Endothelial cell of umbilical vein (primary cell): ENCODE measurements at regions of chr1 and their contacts with region 1.

Region 1: DNA sequence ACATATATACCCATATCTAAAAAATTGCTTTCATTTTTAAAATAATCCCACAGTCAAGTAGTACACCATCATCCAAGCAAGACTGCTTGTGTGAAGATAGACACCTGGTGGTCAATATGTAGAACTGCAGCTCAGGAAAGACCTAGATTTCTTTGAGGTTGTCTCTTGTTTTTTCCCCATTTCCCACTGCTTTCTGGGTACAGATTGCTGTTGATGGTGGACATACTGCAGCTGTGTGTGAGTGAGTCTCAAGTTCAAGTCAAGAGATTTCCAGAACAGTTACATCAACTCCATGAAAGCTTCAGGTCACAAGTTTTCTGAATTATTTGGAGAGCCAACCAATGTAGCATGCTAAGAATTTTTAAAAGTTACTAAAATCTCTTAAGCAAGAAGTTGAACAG is 306.4 kb downstream of the DUSP10 start:
- DNase-seq: peak; percentile 75
- H3K4me3 ChIP-seq: no peak overlapping the region
- H3K27ac ChIP-seq: peak overlapping the region; percentile 16
- H3K4me1 ChIP-seq: peaks cover 26% of the 10 kb centered on the region
- H3K27me3 ChIP-seq: no peaks in the 10 kb centered on the region
- CTCF ChIP-seq: peak; percentile 73 to 81
- POLR2A ChIP-seq: no peak

Region 2: DNA sequence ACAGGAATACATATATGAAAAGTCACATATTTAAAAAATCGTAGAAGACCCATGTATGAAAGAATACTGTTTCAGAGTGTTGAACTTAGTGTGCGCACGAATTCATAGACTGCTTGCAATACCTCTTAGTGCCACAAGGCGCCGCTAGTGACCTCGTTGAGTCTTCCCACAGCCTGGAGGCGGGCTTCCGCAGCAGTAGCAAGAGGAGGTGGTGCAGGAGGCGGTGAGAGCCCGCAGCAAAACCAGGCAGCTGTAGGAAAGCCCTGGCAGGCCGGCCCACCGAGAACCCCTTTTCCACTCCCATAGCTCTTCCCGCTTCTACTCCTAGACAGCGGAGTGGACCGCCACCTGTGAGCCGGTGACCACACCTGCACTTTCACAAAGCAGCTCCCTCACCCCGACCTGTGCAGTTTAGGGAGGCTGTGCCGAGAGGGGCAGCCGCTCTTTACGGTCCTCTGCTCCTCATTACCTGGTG is 625.3 kb before region 1 on chr1:
- CTCF ChIA-PET with region 1: interaction called, 43 read pairs
- POLR2A ChIA-PET with region 1: no interaction called
- dilution Hi-C with region 1: no loop called
- intact Hi-C with region 1: loop called (anchors 1 kb)
- DNase-seq: peak; percentile 82
- H3K4me3 ChIP-seq: no peak overlapping the region
- H3K27ac ChIP-seq: no peak overlapping the region
- H3K4me1 ChIP-seq: peaks cover 8% of the 10 kb centered on the region
- H3K27me3 ChIP-seq: peaks cover 6 to 11% of the 10 kb centered on the region in 2 experiments
- CTCF ChIP-seq: peak; percentile 89 to 95
- POLR2A ChIP-seq: no peak

Region 3: GRCh38 chr1:220908757-220909156 is 526.7 kb before region 1 on chr1:
- CTCF ChIA-PET with region 1: interaction called, 17 read pairs
- POLR2A ChIA-PET with region 1: no interaction called
- dilution Hi-C with region 1: no loop called
- intact Hi-C with region 1: loop called (anchors 1 kb)
- DNase-seq: peak; percentile 38
- H3K4me3 ChIP-seq: no peak overlapping the region
- H3K27ac ChIP-seq: no peak overlapping the region
- H3K4me1 ChIP-seq: no peaks in the 10 kb centered on the region
- H3K27me3 ChIP-seq: peaks cover 9 to 11% of the 10 kb centered on the region in 2 experiments
- CTCF ChIP-seq: peak; percentile 9 to 44
- POLR2A ChIP-seq: no peak

Region 4: DNA sequence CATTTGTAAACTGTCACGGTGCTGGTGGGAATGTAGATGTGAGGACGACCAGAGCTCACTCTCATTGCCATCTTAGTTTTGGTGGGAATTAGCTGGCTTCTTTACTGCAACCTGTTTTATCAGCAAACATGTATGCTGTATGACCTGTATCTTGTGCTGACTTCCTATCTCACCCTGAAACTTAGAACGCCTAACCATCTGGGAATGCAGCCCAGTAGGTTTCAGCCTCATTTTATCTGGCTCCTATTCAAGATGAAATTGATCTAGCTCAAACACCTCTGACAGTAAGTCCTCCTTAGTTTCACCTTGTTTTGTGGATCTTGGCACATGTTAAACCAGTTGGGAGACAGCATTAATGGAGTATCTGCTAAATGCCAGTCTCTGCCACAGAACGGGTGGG is 381.6 kb before region 1 on chr1:
- CTCF ChIA-PET with region 1: no interaction called
- POLR2A ChIA-PET with region 1: no interaction called
- dilution Hi-C with region 1: no loop called
- intact Hi-C with region 1: no loop called
- DNase-seq: no peak
- H3K4me3 ChIP-seq: no peak overlapping the region
- H3K27ac ChIP-seq: no peak overlapping the region
- H3K4me1 ChIP-seq: no peaks in the 10 kb centered on the region
- H3K27me3 ChIP-seq: no peaks in the 10 kb centered on the region
- CTCF ChIP-seq: no peak
- POLR2A ChIP-seq: no peak

Region 5: GRCh38 chr1:221217029-221217428 is 218.5 kb before region 1 on chr1:
- CTCF ChIA-PET with region 1: no interaction called
- POLR2A ChIA-PET with region 1: no interaction called
- dilution Hi-C with region 1: no loop called
- intact Hi-C with region 1: loop called (anchors 2 kb)
- DNase-seq: peak; percentile 92
- H3K4me3 ChIP-seq: no peak overlapping the region
- H3K27ac ChIP-seq: peak overlapping the region; percentile 6
- H3K4me1 ChIP-seq: peaks cover 14% of the 10 kb centered on the region
- H3K27me3 ChIP-seq: peaks cover 0 to 3% of the 10 kb centered on the region in 2 experiments
- CTCF ChIP-seq: no peak
- POLR2A ChIP-seq: no peak

Region 6: GRCh38 chr1:221394011-221394544 is 41.4 kb before region 1 on chr1:
- CTCF ChIA-PET with region 1: interaction called, 14 read pairs
- POLR2A ChIA-PET with region 1: no interaction called
- dilution Hi-C with region 1: no loop called
- intact Hi-C with region 1: loop called (anchors 1 kb)
- DNase-seq: peak; percentile 99
- H3K4me3 ChIP-seq: no peak overlapping the region
- H3K27ac ChIP-seq: peak overlapping the region; percentile 77
- H3K4me1 ChIP-seq: peaks cover 28% of the 10 kb centered on the region
- H3K27me3 ChIP-seq: peaks cover 2 to 3% of the 10 kb centered on the region in 2 experiments
- CTCF ChIP-seq: no peak
- POLR2A ChIP-seq: no peak

Region 7: DNA sequence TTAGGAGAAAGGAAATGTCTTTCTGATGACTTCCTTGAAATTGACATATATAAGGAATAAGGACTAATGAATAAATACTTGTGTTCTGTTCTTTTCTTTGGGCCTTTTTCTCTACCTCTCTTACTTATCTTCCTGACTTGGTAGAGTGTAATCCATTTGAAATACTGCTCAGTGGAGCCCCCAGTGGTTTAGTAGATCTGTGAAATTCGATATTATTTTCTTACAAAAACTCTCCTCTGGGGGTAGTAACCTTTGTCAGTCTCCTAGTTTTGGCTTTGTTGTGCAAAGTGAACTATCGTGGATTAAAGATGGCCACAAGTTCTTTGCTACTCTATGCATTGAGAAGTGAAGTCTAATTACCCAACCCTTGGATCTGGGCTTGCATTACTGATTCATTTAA is 257.6 kb after region 1 on chr1:
- CTCF ChIA-PET with region 1: no interaction called
- POLR2A ChIA-PET with region 1: no interaction called
- dilution Hi-C with region 1: no loop called
- intact Hi-C with region 1: no loop called
- DNase-seq: no peak
- H3K4me3 ChIP-seq: no peak overlapping the region
- H3K27ac ChIP-seq: no peak overlapping the region
- H3K4me1 ChIP-seq: no peaks in the 10 kb centered on the region
- H3K27me3 ChIP-seq: peaks cover 0 to 3% of the 10 kb centered on the region in 2 experiments
- CTCF ChIP-seq: no peak
- POLR2A ChIP-seq: no peak

Region 8: DNA sequence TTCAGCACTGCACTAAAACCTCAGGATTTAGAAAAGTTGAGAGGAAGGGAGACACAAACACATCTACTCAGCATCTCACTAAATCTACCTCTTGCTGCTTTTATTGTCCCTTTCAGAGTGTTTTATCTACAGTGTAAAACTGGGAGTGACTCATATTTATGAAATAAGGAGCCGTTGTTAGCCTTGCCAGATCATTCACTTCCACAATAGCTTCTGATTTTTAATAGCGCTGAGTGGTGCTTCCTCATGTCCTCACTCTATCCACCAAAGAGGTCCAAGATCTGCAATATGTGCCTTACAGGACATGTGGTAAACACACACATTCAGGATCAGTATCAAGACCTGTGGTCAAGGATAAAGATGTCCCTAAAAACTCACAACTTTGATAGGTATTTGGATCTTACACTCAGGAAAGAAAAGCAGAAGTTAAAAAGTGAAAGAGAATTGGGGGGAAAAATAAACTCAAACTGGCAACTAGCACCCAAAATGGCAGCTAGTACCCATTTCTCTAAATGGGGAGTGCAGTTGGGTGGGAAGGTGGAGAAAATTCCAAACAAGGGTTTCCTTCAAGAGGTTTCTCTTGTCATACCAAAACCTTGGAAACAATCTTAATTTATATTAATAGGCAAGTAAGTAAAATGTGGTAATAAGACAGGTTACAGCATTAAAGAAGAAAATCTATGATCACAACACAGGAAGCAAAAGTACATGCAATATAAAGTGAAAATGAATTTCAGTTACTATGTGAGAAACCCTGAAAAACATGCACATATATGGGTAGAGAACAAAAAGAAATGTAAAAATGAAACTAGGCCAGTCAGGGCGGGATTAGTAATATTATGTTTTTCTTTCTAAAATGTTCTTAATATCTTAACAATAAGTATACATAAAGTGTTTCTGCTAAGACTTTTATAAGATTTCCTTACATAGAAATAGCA is 290.5 kb after region 1 on chr1:
- CTCF ChIA-PET with region 1: no interaction called
- POLR2A ChIA-PET with region 1: no interaction called
- dilution Hi-C with region 1: no loop called
- intact Hi-C with region 1: no loop called
- DNase-seq: no peak
- H3K4me3 ChIP-seq: no peak overlapping the region
- H3K27ac ChIP-seq: no peak overlapping the region
- H3K4me1 ChIP-seq: no peaks in the 10 kb centered on the region
- H3K27me3 ChIP-seq: no peaks in the 10 kb centered on the region
- CTCF ChIP-seq: no peak
- POLR2A ChIP-seq: no peak

Region 9: DNA sequence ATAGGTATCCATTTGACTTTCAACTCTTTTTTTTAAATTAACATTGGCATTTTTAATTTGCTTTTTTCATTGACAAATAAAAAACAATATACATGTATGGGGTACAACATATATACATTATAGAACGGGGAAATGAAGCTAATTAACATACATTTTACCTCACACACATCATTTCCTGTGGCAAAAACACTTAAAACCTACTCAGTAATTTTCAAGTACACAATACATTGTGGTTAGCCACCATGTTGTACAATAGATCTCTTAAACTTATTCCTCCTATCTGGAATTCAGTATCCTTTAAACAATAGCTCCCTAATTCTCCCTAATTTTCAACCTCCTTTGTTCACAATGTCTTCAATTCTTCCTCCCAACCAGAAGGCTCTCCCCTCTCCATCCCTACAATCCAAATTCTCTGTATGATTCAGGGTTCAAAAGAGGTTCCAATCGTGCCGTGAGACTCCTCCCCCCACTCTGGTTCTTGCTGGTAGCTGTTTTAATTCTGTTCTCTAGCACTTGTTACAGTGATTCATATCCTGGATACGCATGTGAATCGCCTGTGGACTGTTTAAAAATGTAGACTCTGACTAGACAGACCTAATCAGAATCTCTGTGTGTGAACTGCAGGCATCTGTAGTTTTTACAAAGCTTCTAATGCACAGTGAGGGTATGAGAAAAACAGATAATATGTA is 394.0 kb after region 1 on chr1:
- CTCF ChIA-PET with region 1: no interaction called
- POLR2A ChIA-PET with region 1: no interaction called
- dilution Hi-C with region 1: no loop called
- intact Hi-C with region 1: loop called (anchors 5 kb)
- DNase-seq: peak; percentile 93
- H3K4me3 ChIP-seq: no peak overlapping the region
- H3K27ac ChIP-seq: peak overlapping the region; percentile 63
- H3K4me1 ChIP-seq: peaks cover 58% of the 10 kb centered on the region
- H3K27me3 ChIP-seq: no peaks in the 10 kb centered on the region
- CTCF ChIP-seq: no peak
- POLR2A ChIP-seq: no peak